Colonic mucosa (tissue), 4 donors: ENCODE measurements at regions of chr5 and their contacts with region 1.

Region 1: DNA sequence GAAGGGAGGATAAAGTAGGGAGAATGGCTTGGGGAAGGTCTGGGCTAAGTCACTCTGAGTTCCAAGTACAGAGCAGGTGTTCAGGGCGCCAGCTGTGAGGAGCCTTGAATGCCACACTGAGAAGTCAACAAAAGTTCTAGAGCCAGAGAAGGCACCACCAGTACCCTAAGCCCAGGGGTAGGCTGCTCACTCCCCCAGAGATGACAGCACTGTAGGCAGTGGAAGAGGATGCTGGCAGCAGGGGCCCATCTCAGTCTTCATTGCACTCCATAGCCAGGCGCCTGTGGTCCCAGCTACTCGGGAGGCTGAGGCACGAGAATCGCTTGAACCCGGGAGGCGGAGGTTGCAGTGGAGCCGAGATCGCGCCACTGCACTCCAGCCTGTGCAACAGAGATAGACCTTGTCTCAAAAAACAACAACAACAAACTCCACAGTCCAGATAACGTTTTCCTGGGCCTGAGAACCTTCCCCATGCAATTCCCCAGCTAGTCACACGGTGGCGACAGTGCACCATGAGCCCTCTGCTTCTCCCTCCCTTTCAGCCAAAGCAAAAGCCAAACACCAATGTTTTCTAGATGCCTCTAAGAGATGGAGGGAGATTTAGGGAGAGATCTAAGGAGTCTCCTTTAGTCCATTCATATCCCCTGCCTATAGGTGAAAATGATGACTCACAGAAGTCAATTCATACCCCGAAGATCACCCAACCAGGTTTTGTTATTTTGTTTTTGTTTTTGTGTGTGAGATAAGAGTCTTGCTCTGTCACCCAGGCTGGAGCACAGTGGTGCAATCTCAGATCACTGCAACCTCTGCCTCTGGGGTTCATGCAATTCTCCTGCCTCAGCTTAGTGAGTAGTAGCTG is 19.8 kb upstream of the NSD1 start:
- DNase-seq: peak; percentile 84
- H3K4me3 ChIP-seq: no peak overlapping the region
- H3K27ac ChIP-seq: no peak overlapping the region
- H3K4me1 ChIP-seq: peaks cover 3% of the 10 kb centered on the region
- H3K27me3 ChIP-seq: no peaks in the 10 kb centered on the region
- CTCF ChIP-seq: peak; percentile 97

Region 2: GRCh38 chr5:176660860-176661641 is 452.7 kb before region 1 on chr5:
- intact Hi-C with region 1: loop called (anchors 5 kb)
- DNase-seq: peak; percentile 71
- H3K4me3 ChIP-seq: no peak overlapping the region
- H3K27ac ChIP-seq: no peak overlapping the region
- H3K4me1 ChIP-seq: peaks cover 9% of the 10 kb centered on the region
- H3K27me3 ChIP-seq: no peaks in the 10 kb centered on the region
- CTCF ChIP-seq: peak; percentile 98

Region 3: DNA sequence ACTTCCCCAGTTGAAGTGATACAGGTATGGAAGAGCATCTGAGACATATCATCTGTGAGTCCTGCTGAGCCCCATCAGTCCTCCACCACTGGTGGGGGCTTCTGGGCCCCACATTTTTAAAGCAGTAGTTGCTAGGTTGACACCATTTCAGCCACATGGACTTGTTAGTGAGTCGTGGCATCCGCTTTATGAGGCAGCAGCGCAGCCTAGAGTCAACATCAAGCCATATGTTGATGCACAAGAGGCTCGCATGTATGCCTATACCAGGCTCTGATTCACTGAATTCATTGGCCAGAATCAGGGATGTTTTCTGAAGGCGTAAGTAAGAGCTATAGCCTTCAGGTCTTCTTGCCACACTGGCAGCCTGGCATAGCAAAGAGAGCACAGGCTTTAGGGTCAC is 64.5 kb before region 1 on chr5:
- intact Hi-C with region 1: no loop called
- DNase-seq: no peak
- H3K4me3 ChIP-seq: no peak overlapping the region
- H3K27ac ChIP-seq: no peak overlapping the region
- H3K4me1 ChIP-seq: no peaks in the 10 kb centered on the region
- H3K27me3 ChIP-seq: no peaks in the 10 kb centered on the region
- CTCF ChIP-seq: no peak

Region 4: DNA sequence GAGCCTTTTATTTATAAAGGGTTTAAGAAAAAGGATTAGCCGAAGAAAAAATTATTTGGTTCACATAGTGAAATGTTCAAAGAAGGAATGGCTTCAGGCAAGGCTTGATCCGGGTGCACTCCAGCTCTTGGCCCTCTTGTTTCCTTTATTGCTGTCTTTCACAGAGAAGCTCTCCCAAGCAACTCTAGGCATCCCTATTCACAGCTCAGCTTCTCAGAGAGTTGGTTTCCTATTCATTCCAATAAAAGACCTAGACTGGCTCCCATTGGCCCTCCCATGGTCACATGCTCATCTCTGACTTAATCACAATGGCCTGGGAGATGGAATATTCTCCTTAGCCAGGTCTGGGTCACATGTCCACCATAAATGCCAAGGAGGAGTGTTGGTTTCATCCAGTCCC is 36.5 kb before region 1 on chr5:
- intact Hi-C with region 1: loop called (anchors 2 kb)
- DNase-seq: no peak
- H3K4me3 ChIP-seq: no peak overlapping the region
- H3K27ac ChIP-seq: no peak overlapping the region
- H3K4me1 ChIP-seq: no peaks in the 10 kb centered on the region
- H3K27me3 ChIP-seq: no peaks in the 10 kb centered on the region
- CTCF ChIP-seq: no peak

Region 5: GRCh38 chr5:177256296-177256695 is 142.5 kb after region 1 on chr5:
- intact Hi-C with region 1: no loop called
- DNase-seq: no peak
- H3K4me3 ChIP-seq: no peak overlapping the region
- H3K27ac ChIP-seq: no peak overlapping the region
- H3K4me1 ChIP-seq: no peaks in the 10 kb centered on the region
- H3K27me3 ChIP-seq: no peaks in the 10 kb centered on the region
- CTCF ChIP-seq: no peak

Region 6: GRCh38 chr5:177311723-177312648 is 198.2 kb after region 1 on chr5 and contains the start of gene MXD3:
- intact Hi-C with region 1: loop called (anchors 10 kb)
- DNase-seq: peak; percentile 97
- H3K4me3 ChIP-seq: peak within 1 kb of the TSS; percentile 56
- H3K27ac ChIP-seq: peak within 1 kb of the TSS; percentile 41
- H3K4me1 ChIP-seq: peaks cover 32% of the 10 kb centered on the region
- H3K27me3 ChIP-seq: no peaks in the 10 kb centered on the region
- CTCF ChIP-seq: no peak
- total RNA-seq, gene MXD3: 9.3 to 36.4 TPM